ENCODE measurements at regions of chr9 and their contacts with region 1.

Region 1: DNA sequence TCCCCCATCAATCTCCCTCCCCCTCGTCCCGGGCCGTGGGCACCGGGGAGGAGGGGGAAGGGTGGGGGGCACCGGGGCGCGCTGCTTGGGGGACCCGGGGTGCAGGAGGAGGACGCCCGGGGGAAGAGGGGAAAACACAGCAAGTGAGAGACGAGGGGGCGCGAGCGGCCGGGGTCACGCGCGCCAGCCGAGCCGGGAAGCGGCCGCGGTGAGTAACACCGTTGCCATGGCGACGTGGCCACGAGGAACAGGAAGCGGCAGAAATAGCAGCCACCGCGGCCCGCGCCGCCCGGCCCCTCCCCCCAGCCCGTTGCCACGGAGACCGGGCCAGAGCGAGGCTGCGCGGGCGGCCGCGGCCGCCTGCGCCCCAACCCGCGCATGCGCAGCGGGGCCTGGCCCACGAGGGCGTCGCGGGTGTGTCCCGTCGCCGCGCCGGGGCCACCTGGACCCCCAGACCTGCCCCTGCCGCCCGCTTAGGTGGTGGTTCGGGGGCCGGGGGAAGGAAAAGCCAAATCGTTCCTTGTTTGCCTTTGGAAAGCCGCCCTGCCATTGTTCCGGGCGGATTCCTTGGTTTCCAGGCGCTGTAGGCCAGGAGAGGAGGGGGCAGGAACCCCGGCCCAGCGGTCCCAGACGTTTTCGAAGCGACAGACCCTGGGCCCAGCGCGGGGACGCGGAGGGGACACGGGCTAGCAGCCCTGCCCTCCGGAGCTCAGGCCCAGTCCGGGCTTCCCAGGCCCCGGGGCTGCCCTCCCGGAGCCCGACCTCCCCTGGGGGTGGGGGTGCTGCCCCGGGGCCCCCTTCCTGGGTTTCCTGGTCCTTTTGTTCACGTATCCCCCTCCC is 207.1 kb downstream of the C9orf50 start:
- DNase-seq: peak; percentile 98
- H3K4me3 Mint-ChIP-seq: peak overlapping the region; percentile 73
- H3K27ac Mint-ChIP-seq: peak overlapping the region; percentile 98
- H3K4me1 Mint-ChIP-seq: peaks cover 14% of the 10 kb centered on the region
- H3K27me3 Mint-ChIP-seq: no peaks in the 10 kb centered on the region

Region 2: GRCh38 chr9:129482521-129483414 is 69.0 kb after region 1 on chr9:
- CTCF ChIA-PET with region 1: no interaction called
- POLR2A ChIA-PET with region 1: no interaction called
- intact Hi-C with region 1: loop called (anchors 5 kb)
- DNase-seq: peak; percentile 45
- H3K4me3 Mint-ChIP-seq: peak overlapping the region; percentile 61
- H3K27ac Mint-ChIP-seq: peak overlapping the region; percentile 69
- H3K4me1 Mint-ChIP-seq: peaks cover 42% of the 10 kb centered on the region
- H3K27me3 Mint-ChIP-seq: peaks cover 2% of the 10 kb centered on the region

Region 3: GRCh38 chr9:130396581-130396980 is 982.8 kb after region 1 on chr9:
- CTCF ChIA-PET with region 1: no interaction called
- POLR2A ChIA-PET with region 1: no interaction called
- intact Hi-C with region 1: no loop called
- DNase-seq: no peak
- H3K4me3 Mint-ChIP-seq: no peak overlapping the region
- H3K27ac Mint-ChIP-seq: no peak overlapping the region
- H3K4me1 Mint-ChIP-seq: no peaks in the 10 kb centered on the region
- H3K27me3 Mint-ChIP-seq: no peaks in the 10 kb centered on the region